ENCODE measurements at regions of chr1 and their contacts with region 1.

Region 1: DNA sequence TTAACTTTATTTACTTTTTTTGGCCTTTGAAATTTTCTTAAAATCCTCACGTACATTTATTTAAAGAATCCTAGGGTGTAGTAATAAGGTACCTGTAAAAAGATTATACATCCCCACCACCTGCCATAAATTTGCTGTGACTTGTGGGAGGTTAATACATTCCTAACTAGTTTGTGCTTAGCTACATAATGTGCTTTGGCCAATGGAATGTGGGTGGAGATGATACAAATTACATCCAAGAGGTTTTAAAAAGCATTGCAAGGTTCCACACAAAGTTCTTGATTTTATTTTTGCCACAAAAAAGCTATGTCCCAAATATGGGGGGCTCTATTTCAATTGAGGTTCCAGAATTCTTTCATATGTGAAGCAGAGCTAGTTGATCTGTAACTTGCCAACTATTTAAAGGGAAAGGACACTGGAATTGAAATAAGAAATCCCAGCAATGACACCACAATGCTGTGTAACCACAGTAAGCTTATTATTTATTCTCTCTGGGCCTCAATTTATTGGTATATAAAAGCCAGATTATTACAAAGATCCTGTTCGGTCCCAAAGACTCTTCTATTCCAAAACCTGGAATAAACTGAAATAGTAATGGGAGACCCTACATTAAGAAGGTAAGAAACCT is 15.7 kb downstream of the ASPM start:
- DNase-seq: peak; percentile 22
- H3K4me3 ChIP-seq: no peak overlapping the region
- H3K27ac ChIP-seq: no peak overlapping the region
- H3K4me1 ChIP-seq: peaks cover 2% of the 10 kb centered on the region
- H3K27me3 ChIP-seq: no peaks in the 10 kb centered on the region
- CTCF ChIP-seq: no peak
- POLR2A ChIP-seq: no peak

Region 2: DNA sequence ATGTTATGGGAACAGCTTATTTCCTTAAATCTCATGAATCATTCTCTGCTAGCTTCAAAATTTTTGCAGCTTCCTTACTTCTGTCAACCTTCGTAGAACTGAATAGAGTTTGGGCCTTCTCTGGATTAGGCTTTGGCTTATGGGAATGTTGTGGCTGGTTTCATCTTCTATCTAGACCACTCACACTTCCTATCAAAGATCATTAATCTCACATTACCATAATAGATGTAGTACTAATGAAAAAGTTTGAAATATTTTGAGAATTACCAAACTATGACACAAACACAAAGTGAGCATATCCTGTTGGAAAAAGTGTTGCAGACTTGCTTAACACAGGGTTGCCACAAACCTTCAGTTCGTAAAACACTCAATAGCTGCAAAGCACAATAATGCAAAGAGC is 14.6 kb before region 1 on chr1:
- CTCF ChIA-PET with region 1: interaction called, 4 read pairs
- POLR2A ChIA-PET with region 1: no interaction called
- dilution Hi-C with region 1: no loop called
- intact Hi-C with region 1: loop called (anchors 2 kb)
- DNase-seq: peak; percentile 57
- H3K4me3 ChIP-seq: no peak overlapping the region
- H3K27ac ChIP-seq: no peak overlapping the region
- H3K4me1 ChIP-seq: no peaks in the 10 kb centered on the region
- H3K27me3 ChIP-seq: no peaks in the 10 kb centered on the region
- CTCF ChIP-seq: no peak
- POLR2A ChIP-seq: no peak

Measured in endothelial cell of umbilical vein (primary cell).